Activated B cell treated with CpG ODN at 0.5 μM for 24 hours (primary cell): ENCODE measurements at regions of chr6 and their contacts with region 1.

Region 1: DNA sequence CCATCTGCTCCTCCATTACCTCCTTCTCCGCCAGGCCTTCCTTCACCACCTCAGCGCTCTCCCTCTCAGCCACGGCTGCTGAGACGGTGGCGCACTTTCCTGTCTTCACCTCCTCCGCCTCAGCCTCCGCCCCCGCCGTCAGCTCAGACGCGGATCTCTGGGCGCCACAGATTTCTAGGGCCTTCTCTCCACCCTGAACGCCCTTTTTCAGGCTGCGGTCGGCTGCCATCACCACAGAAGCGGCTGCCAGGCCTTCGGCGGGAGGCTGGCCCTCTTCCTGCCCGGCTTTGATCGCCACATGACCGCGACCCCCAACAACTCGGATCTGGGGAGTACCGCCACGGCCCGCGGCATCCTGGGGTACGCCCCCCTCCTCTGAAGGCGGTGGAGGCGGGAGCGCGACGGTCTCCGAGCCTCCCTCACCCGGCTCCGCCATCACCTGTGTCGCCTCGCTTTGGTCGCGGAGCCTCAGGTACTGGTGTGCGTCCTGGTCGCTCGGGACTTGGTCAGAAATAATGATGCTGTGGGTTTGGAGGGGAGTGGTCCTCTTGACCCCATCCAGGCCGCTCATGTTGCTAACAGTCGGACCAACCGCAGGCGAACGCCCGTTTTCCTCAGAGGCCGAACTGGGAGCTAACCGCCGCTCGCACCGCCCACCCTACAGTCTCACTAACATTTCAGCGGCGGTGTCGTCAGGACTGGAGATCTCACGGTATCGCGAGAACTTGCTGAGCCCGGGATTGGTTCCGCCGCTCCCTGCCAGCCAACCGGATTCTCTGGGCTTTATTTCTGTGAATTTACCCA is at the start of gene TSPYL1:
- DNase-seq: peak; percentile 85
- ATAC-seq: peak; percentile 91
- H3K4me3 Mint-ChIP-seq: peak within 1 kb of the TSS; percentile 95
- H3K27ac Mint-ChIP-seq: peak within 1 kb of the TSS; percentile 100
- H3K4me1 Mint-ChIP-seq: peaks cover 71% of the 10 kb centered on the region
- H3K27me3 Mint-ChIP-seq: no peaks in the 10 kb centered on the region
- CTCF ChIP-seq: no peak
- total RNA-seq, gene TSPYL1: 67.4 and 68.4 TPM in 2 replicates

Region 2: GRCh38 chr6:116253505-116254296 is 25.8 kb before region 1 on chr6 and contains the start of gene TSPYL4:
- CTCF ChIA-PET with region 1: interaction called, 3 read pairs
- POLR2A ChIA-PET with region 1: interaction called, 22 read pairs
- intact Hi-C with region 1: loop called (anchors 1 kb)
- DNase-seq: peak; percentile 80
- ATAC-seq: peak; percentile 98
- H3K4me3 Mint-ChIP-seq: no peak within 1 kb of the TSS
- H3K27ac Mint-ChIP-seq: no peak within 1 kb of the TSS
- H3K4me1 Mint-ChIP-seq: peaks cover 1% of the 10 kb centered on the region
- H3K27me3 Mint-ChIP-seq: no peaks in the 10 kb centered on the region
- CTCF ChIP-seq: no peak
- total RNA-seq, gene TSPYL4: 16.0 and 16.7 TPM in 2 replicates

Region 3: DNA sequence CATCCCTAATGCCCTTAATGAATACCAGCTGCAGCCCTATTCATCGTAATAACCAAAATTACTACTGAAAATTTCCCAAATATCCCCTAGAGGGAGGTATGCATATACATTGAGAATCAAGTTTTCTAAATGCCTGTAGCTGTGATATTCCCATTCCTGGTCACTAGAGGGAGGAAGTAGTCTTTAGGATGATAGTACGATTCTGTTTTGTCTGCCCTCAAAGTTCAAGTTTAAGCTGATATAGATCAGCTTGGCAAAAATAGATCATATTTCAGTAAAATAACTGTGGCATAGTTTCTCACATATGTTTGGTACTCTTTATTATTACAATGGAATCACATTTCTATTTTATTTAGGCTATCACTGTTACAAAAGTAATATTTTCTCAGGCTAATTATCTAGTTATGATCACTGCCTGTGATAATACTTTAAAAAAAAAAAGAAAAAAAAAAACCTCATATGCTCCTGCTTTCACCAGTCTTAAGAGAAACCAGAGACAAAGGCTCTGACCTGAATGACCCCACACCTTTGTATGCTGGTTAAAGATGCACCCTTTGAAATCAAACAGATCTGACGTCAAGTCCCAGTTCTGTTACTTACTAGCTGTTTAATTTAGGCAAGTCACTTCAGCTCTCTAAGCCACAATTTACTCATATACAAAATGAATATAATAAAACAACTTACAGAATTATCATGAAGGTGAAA is 10.7 kb before region 1 on chr6:
- CTCF ChIA-PET with region 1: interaction called, 17 read pairs
- POLR2A ChIA-PET with region 1: interaction called, 13 read pairs
- intact Hi-C with region 1: loop called (anchors 1 kb)
- DNase-seq: no peak
- ATAC-seq: peak; percentile 91
- H3K4me3 Mint-ChIP-seq: no peak overlapping the region
- H3K27ac Mint-ChIP-seq: no peak overlapping the region
- H3K4me1 Mint-ChIP-seq: peaks cover 17% of the 10 kb centered on the region
- H3K27me3 Mint-ChIP-seq: no peaks in the 10 kb centered on the region
- CTCF ChIP-seq: peak; percentile 28

Region 4: GRCh38 chr6:116405138-116405537 is 125.7 kb after region 1 on chr6:
- CTCF ChIA-PET with region 1: no interaction called
- POLR2A ChIA-PET with region 1: interaction called, 4 read pairs
- intact Hi-C with region 1: loop called (anchors 2 kb)
- DNase-seq: no peak
- ATAC-seq: peak; percentile 56
- H3K4me3 Mint-ChIP-seq: peak overlapping the region; percentile 67
- H3K27ac Mint-ChIP-seq: peak overlapping the region; percentile 92
- H3K4me1 Mint-ChIP-seq: peaks cover 59% of the 10 kb centered on the region
- H3K27me3 Mint-ChIP-seq: no peaks in the 10 kb centered on the region
- CTCF ChIP-seq: no peak

Region 5: DNA sequence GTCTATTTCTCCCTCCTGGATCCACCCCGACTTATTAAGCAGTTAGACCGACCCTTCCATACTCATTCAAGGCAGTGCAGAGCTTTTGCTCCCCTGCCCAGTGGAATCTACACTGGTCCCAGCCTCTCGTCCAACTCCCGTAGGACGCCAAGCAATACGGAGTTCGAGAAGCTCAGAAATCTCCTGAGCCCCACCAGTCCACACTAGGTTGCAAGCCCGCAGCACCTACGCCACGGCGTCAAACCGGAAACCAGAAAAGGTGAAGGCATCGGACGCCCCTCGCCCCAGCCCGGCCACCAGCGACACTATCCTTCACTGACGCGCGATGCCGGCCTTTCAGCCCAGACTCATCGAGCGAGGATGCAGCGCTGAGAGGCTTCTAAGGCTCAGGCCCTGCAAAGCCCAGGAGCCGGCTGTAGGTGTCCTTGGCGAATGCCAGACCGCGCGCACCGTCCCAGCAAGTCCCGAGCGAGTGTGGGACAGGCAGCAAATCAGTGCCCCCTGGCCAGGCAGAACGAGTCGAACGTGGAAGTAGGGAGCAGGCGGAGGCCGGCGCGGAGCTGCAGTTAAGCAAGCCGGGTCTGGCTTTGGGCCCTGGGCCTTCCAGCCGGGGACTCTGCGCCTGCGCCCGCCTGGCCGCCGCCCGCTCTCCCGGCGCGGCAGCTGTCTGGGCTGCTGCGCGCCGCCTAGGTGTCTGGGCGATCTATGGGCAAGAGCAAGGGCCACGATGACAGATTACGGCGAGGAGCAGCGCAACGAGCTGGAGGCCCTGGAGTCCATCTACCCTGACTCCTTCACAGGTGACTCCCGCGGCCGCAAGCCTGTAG is 291.6 kb after region 1 on chr6 and contains the start of gene RWDD1:
- CTCF ChIA-PET with region 1: interaction called, 3 read pairs
- POLR2A ChIA-PET with region 1: interaction called, 50 read pairs
- intact Hi-C with region 1: loop called (anchors 1 kb)
- DNase-seq: peak; percentile 94
- ATAC-seq: peak; percentile 94
- H3K4me3 Mint-ChIP-seq: peak within 1 kb of the TSS; percentile 95
- H3K27ac Mint-ChIP-seq: peak within 1 kb of the TSS; percentile 96
- H3K4me1 Mint-ChIP-seq: peaks cover 51% of the 10 kb centered on the region
- H3K27me3 Mint-ChIP-seq: no peaks in the 10 kb centered on the region
- CTCF ChIP-seq: no peak
- total RNA-seq, gene RWDD1: 30.9 and 33.8 TPM in 2 replicates

Region 6: GRCh38 chr6:116667623-116668022 is 388.2 kb after region 1 on chr6:
- CTCF ChIA-PET with region 1: no interaction called
- POLR2A ChIA-PET with region 1: interaction called, 6 read pairs
- intact Hi-C with region 1: loop called (anchors 5 kb)
- DNase-seq: no peak
- ATAC-seq: peak; percentile 62
- H3K4me3 Mint-ChIP-seq: peak overlapping the region; percentile 100
- H3K27ac Mint-ChIP-seq: peak overlapping the region; percentile 99
- H3K4me1 Mint-ChIP-seq: peaks cover 41% of the 10 kb centered on the region
- H3K27me3 Mint-ChIP-seq: peaks cover 8% of the 10 kb centered on the region
- CTCF ChIP-seq: no peak